CD4-positive, alpha-beta memory T cell (primary cell): ENCODE measurements at regions of chr7 and their contacts with region 1.

Region 1: GRCh38 chr7:138886501-138886917 is 88.5 kb upstream of the ATP6V0A4 start:
- DNase-seq: peak; percentile 53 to 78 (median 75)
- H3K4me3 ChIP-seq: no peak overlapping the region
- H3K4me3 Mint-ChIP-seq: peak overlapping the region in 4 of 8 donors; percentile 19 to 77 (median 54)
- H3K27ac ChIP-seq: no peak overlapping the region
- H3K27ac Mint-ChIP-seq: peak overlapping the region in 5 of 7 donors; percentile 65 to 92 (median 86)
- H3K4me1 ChIP-seq: no peaks in the 10 kb centered on the region
- H3K4me1 Mint-ChIP-seq: peaks cover 12 to 17% (median 15%) of the 10 kb centered on the region in 4 donors
- H3K27me3 ChIP-seq: no peaks in the 10 kb centered on the region
- H3K27me3 Mint-ChIP-seq: no peaks in the 10 kb centered on the region

Region 2: DNA sequence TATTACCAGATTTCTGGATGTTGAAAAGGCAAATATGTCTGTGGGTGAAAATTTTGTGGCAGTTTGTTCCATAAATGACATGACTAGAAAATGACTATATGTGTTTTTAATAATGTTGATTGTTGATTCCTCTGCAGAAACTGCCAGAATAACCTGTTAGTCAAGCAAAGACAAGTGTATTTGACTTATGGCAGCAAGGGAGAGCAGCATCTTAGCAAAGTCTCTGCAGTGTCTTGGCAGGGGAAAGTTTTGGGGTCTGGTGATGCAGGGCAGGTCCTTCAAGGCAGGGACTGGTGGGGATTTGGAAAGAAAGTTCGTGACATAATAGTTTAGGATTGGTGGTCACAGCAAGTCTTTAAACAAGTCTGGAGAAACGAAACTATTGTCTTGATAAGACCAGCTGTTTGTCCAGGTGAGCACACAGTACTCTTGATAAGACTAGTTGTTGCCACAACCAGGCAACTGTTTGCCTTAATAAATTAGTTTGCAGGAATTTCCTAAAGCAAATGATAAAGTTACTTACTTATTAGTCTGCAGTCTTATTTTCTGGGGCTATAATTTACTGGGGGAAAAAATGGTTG is 674.3 kb before region 1 on chr7:
- CTCF ChIA-PET with region 1: no interaction called
- POLR2A ChIA-PET with region 1: no interaction called
- intact Hi-C with region 1: no loop called
- DNase-seq: no peak
- H3K4me3 ChIP-seq: no peak overlapping the region
- H3K4me3 Mint-ChIP-seq: no peak overlapping the region
- H3K27ac ChIP-seq: no peak overlapping the region
- H3K27ac Mint-ChIP-seq: no peak overlapping the region
- H3K4me1 ChIP-seq: no peaks in the 10 kb centered on the region
- H3K4me1 Mint-ChIP-seq: no peaks in the 10 kb centered on the region
- H3K27me3 ChIP-seq: no peaks in the 10 kb centered on the region
- H3K27me3 Mint-ChIP-seq: peaks cover 0 to 5% of the 10 kb centered on the region in 2 donors

Region 3: GRCh38 chr7:138898255-138898654 is 11.7 kb after region 1 on chr7:
- CTCF ChIA-PET with region 1: interaction called, 43 read pairs
- POLR2A ChIA-PET with region 1: interaction called, 16 read pairs
- intact Hi-C with region 1: loop called (anchors 1 kb)
- DNase-seq: peak in 3 of 5 donors; percentile 9 to 64 (median 25)
- H3K4me3 ChIP-seq: no peak overlapping the region
- H3K4me3 Mint-ChIP-seq: peak overlapping the region in 4 of 8 donors; percentile 46 to 69 (median 58)
- H3K27ac ChIP-seq: no peak overlapping the region
- H3K27ac Mint-ChIP-seq: peak overlapping the region in 2 of 7 donors; percentile 25 to 57
- H3K4me1 ChIP-seq: peaks cover 27% of the 10 kb centered on the region
- H3K4me1 Mint-ChIP-seq: peaks cover 17 to 36% (median 24%) of the 10 kb centered on the region in 4 donors
- H3K27me3 ChIP-seq: no peaks in the 10 kb centered on the region
- H3K27me3 Mint-ChIP-seq: peaks cover 4 to 5% of the 10 kb centered on the region in 2 donors

Region 4: GRCh38 chr7:139016931-139017511 is 130.5 kb after region 1 on chr7:
- CTCF ChIA-PET with region 1: interaction called, 38 read pairs
- POLR2A ChIA-PET with region 1: interaction called, 9 read pairs
- intact Hi-C with region 1: loop called (anchors 1 kb)
- DNase-seq: peak; percentile 56 to 71 (median 63)
- H3K4me3 ChIP-seq: no peak overlapping the region
- H3K4me3 Mint-ChIP-seq: no peak overlapping the region
- H3K27ac ChIP-seq: no peak overlapping the region
- H3K27ac Mint-ChIP-seq: no peak overlapping the region
- H3K4me1 ChIP-seq: no peaks in the 10 kb centered on the region
- H3K4me1 Mint-ChIP-seq: peaks cover 0 to 12% (median 5%) of the 10 kb centered on the region in 4 donors
- H3K27me3 ChIP-seq: no peaks in the 10 kb centered on the region
- H3K27me3 Mint-ChIP-seq: peaks cover 0 to 5% of the 10 kb centered on the region in 2 donors

Region 5: DNA sequence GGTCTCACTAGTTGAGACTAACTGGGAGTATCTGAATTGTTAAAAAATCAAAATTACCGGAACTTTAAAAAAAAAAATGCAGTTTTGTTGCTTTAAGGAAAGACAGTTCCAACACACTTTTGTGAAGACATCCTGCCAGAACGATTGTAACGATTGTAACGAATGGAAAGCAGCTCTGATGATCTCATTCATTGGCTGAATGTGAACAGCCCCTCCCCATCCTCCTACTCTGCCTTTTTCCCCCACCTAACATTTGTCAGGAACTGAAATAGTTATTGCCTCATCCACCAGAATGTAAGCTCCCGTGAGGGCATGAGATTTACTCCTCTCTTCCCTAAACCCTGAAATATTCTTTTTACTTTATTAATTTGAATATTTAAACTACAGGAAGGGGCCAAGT is 172.4 kb after region 1 on chr7:
- CTCF ChIA-PET with region 1: interaction called, 4 read pairs
- POLR2A ChIA-PET with region 1: interaction called, 3 read pairs
- intact Hi-C with region 1: loop called (anchors 5 kb)
- DNase-seq: no peak
- H3K4me3 ChIP-seq: no peak overlapping the region
- H3K4me3 Mint-ChIP-seq: no peak overlapping the region
- H3K27ac ChIP-seq: no peak overlapping the region
- H3K27ac Mint-ChIP-seq: peak overlapping the region in 5 of 7 donors; percentile 10 to 86 (median 70)
- H3K4me1 ChIP-seq: peaks cover 45% of the 10 kb centered on the region
- H3K4me1 Mint-ChIP-seq: peaks cover 36 to 50% (median 42%) of the 10 kb centered on the region in 4 donors
- H3K27me3 ChIP-seq: no peaks in the 10 kb centered on the region
- H3K27me3 Mint-ChIP-seq: no peaks in the 10 kb centered on the region

Region 6: DNA sequence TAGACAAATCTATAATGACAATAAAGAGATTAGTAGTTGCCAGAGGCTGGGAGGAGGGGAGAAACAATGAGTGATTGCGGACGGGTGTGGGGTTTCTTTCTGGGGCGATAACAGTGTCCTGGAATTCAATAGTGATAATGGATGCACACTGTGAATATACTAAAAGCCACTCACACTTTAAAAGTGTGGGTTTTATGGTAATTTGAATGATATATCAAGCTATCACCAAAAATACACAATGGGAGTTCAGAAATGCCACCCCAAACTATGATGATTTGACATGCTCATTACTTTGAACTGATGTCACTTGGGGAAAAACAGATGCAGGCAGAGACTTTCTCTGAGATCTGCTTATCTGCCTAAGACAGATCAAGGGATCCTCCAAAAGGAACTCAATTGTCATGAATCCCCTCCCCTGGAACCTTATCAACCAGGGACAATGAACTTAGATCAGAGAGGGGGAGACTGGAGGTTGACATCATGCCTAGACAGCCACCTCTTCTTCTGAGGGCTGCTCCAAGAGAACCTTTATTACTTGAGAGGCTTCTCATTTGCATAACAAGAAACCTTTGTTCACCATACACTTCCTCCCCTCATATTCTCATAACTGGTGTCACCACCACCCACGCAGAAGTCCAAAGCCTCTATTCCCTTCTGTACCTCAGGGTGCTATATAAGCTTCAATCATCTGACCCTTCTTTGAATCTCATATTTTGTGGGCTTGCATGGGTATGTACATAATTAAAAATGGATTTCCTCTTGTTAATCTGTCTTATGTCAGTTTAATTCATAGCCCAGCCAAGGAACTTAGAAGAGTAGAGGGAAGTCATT is 237.8 kb after region 1 on chr7:
- CTCF ChIA-PET with region 1: interaction called, 36 read pairs
- POLR2A ChIA-PET with region 1: interaction called, 3 read pairs
- intact Hi-C with region 1: loop called (anchors 1 kb)
- DNase-seq: no peak
- H3K4me3 ChIP-seq: no peak overlapping the region
- H3K4me3 Mint-ChIP-seq: peak overlapping the region in 1 of 8 donors; percentile 40
- H3K27ac ChIP-seq: no peak overlapping the region
- H3K27ac Mint-ChIP-seq: no peak overlapping the region
- H3K4me1 ChIP-seq: peaks cover 12% of the 10 kb centered on the region
- H3K4me1 Mint-ChIP-seq: peaks cover 7 to 31% (median 12%) of the 10 kb centered on the region in 4 donors
- H3K27me3 ChIP-seq: no peaks in the 10 kb centered on the region
- H3K27me3 Mint-ChIP-seq: no peaks in the 10 kb centered on the region